Psoas muscle (tissue), 8 donors: ENCODE measurements at regions of chr1 and their contacts with region 1.

Region 1: DNA sequence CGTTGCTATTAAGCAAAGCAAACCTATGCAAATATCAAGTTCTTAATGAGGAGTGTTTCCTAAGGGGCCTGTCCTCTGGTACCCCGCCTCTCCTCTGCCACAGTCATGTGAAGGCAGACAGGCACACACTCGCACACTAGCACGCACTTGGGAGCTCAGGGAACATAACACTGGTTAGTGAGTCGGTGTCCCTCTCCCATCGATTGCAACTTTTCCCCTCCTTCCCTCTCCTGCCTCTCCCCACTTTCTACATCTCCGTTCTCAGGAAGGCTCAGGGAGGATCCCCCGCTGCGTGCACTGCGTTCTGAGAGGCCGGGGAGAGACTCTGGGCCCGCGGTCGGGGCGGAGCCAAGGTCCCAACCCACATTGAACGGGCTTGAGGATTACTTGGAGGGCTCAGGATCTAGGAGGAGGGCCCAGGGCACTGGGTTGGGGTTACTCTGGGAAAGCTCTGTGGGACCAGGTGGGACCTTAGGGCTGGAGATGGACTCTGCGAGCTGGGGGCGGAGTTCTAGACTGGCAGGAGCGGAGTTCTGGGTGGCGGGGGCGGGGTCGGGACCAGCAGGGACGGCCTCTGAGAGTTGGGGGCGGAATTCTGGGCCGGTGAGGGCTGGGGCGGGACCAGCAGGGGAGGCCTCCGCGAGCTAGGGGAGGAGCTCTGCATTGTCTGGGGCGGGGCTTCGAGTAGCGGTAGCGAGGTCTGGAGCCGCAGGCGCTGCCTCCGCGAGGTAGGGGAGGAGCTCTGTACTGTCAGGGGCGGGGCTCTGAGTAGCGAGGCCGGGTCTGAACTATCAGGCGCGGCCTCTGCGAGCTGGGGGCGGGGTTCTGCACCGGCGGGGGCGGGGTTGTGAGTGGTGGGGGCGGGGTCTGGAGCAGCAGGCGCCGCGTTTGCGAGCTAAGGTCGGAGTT is 533 bp upstream of the LEPR start:
- DNase-seq: peak; percentile 97 to 99
- ATAC-seq: peak; percentile 92 to 97 (median 93)
- H3K4me3 ChIP-seq: peak overlapping the region; percentile 91
- H3K27ac ChIP-seq: peak overlapping the region; percentile 98
- H3K4me1 ChIP-seq: peaks cover 34% of the 10 kb centered on the region
- H3K27me3 ChIP-seq: no peaks in the 10 kb centered on the region
- CTCF ChIP-seq: no peak

Region 2: GRCh38 chr1:65254319-65255034 is 165.5 kb before region 1 on chr1:
- intact Hi-C with region 1: loop called in 1 of 2 experiments (anchors 10 kb)
- DNase-seq: peak; percentile 82 to 87
- ATAC-seq: peak; percentile 92 to 98 (median 96)
- H3K4me3 ChIP-seq: peak overlapping the region; percentile 86
- H3K27ac ChIP-seq: no peak overlapping the region
- H3K4me1 ChIP-seq: no peaks in the 10 kb centered on the region
- H3K27me3 ChIP-seq: no peaks in the 10 kb centered on the region
- CTCF ChIP-seq: peak; percentile 18

Region 3: GRCh38 chr1:65509912-65510680 is 90.2 kb after region 1 on chr1:
- intact Hi-C with region 1: loop called in 1 of 2 experiments (anchors 5 kb)
- DNase-seq: no peak
- ATAC-seq: no peak
- H3K4me3 ChIP-seq: no peak overlapping the region
- H3K27ac ChIP-seq: no peak overlapping the region
- H3K4me1 ChIP-seq: peaks cover 37% of the 10 kb centered on the region
- H3K27me3 ChIP-seq: no peaks in the 10 kb centered on the region
- CTCF ChIP-seq: no peak